Posterior cingulate gyrus (tissue), 11 donors: ENCODE measurements at regions of chr19 and their contacts with region 1.

Region 1: DNA sequence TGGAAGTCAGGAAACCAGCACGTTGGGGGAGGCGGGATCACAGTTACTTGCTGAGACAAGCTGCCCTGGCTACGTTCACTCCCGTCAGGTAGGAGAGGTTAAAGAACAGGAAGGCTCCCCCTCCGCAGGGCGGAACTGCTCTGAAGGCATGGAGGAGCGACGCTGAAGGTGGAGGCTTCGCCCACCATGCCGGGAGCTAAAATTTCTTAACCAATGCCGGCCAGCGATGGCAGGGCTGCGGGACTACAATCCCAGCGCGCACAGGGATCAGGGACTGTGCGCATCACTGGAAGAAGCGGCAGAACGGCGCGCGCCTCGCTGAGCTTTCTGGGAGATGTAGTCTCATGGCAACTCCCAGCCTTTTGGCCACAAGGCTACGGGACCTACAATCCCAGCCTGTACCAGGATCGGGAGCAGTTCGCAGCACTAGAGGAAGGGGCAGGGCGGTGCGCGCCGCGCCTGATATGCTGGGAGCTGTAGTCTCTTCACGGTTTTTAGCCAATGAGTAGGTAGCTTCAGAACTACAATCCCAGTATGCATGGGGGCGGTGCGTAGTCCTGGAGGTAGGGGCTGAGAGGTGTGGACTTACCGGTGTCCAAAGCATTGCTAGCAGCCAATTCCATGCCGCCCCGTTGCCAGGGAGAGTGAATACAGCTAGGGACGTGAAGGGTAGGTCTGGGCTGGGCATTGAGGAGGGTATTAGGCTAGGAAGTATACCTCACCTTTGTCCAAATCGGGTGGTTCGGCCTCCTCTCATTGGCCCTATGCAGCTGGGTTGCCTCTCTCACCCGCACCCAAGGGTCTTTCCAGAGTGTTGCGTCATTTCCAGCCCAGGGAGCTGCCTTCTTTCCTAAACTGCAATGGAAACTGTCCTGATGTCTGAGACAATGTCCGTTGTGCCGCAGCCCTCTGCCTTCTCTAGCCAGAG is 12.8 kb upstream of the ZNF682 start:
- DNase-seq: peak; percentile 91 to 100 (median 98)

Region 2: GRCh38 chr19:19966862-19967261 is 85.2 kb before region 1 on chr19:
- intact Hi-C with region 1: no loop called
- DNase-seq: no peak

Region 3: GRCh38 chr19:20039203-20039723 is 12.8 kb before region 1 on chr19 and contains the start of gene ZNF682:
- intact Hi-C with region 1: loop called (anchors 1 kb)
- DNase-seq: peak; percentile 89 to 99 (median 95)

Region 4: GRCh38 chr19:20167020-20167644 is 115.0 kb after region 1 on chr19 and contains the start of gene ZNF486:
- intact Hi-C with region 1: loop called (anchors 10 kb)
- DNase-seq: peak; percentile 86 to 99 (median 96)